IMR-90 (cell line): ENCODE measurements at regions of chr6 and their contacts with region 1.

Region 1: DNA sequence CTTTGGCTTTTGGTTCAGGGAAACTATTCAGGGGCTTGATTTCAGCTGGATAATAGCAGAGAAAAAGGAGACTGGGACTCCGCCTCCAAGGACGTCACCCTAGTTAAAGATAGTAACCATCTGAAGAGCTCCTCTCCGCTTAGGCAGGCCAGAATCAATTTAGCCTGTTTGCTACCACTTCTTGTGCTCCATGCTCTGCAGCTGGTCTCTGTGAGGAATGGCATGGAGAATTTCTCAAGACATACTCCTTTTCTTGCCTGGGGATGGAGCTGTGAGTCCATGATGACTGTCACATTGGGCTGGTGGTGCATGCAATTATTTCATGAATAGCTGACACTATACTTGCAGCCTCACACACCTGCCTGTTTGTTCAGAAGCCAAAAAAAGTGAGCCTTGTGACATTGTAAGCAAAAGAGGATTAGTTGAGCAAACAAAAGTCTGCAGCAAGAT is 61.4 kb downstream of the TXLNB start:
- DNase-seq: peak; percentile 46
- ATAC-seq: peak; percentile 80
- H3K4me3 ChIP-seq: no peak overlapping the region
- H3K27ac ChIP-seq: no peak overlapping the region
- H3K4me1 ChIP-seq: peaks cover 2% of the 10 kb centered on the region; the same call in 1 of the 2 replicates
- H3K27me3 ChIP-seq: no peaks in the 10 kb centered on the region
- CTCF ChIP-seq: peak; percentile 25; the same call in 1 of the 2 replicates
- POLR2A ChIP-seq: no peak
- RAD21 ChIP-seq: peak; percentile 31; the same call in 1 of the 2 replicates

Region 2: GRCh38 chr6:139355172-139355571 is 124.8 kb after region 1 on chr6:
- CTCF ChIA-PET with region 1: no interaction called
- POLR2A ChIA-PET with region 1: no interaction called
- dilution Hi-C with region 1: no loop called
- in situ Hi-C with region 1: loop called (anchors 5 kb)
- intact Hi-C with region 1: no loop called
- DNase-seq: no peak
- ATAC-seq: no peak
- H3K4me3 ChIP-seq: no peak overlapping the region
- H3K27ac ChIP-seq: no peak overlapping the region
- H3K4me1 ChIP-seq: no peaks in the 10 kb centered on the region
- H3K27me3 ChIP-seq: no peaks in the 10 kb centered on the region; the same call in 1 of the 2 replicates
- CTCF ChIP-seq: no peak
- POLR2A ChIP-seq: no peak
- RAD21 ChIP-seq: no peak